ENCODE measurements at regions of chr5 and their contacts with region 1.

Region 1: DNA sequence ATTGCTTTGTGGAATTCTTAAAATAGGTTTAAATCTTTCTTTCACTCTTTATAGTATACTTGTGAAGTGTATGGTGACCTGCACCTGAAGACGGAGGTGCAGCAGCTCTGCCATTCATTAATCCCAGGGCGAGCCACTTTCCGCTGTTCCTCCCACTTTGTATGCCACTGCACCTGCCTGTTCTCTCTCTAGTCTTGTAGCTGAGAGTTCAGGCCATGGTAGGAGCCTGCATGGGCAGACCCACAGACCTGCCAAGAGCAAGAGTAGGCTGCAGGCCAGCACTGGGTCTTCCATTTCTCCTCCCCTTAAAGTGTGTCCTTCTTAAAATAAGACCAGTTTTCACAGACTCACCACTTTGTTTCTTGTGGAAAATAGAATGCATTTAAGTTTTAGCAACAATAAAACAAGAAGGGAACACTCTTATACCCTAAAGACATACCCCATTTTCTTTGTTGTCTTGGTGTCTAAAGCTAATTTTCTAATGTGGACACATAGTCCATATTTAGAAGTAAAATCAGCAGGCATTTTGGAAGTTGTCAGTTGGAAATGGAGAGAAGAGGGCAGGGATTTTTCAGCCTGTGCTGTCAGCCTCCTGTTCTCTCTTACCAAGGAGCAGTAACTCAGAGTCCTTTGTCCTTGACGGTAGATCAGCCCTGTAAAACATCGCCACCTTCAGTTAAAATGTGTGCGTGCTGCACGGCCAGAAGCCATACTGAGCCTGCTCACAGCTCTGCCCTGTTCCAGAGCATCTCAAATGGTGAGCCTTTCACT is 103.2 kb downstream of the SNCAIP start:
- DNase-seq: peak; percentile 55
- H3K4me3 ChIP-seq: no peak overlapping the region
- H3K27ac ChIP-seq: no peak overlapping the region; a peak in 1 of 4 replicates
- H3K4me1 ChIP-seq: peaks cover 0 to 6% of the 10 kb centered on the region in 2 experiments; a peak in 1 of 4 replicates
- H3K27me3 ChIP-seq: no peaks in the 10 kb centered on the region
- CTCF ChIP-seq: peak; percentile 62
- EP300 ChIP-seq: no peak
- RAD21 ChIP-seq: peak; percentile 98

Region 2: DNA sequence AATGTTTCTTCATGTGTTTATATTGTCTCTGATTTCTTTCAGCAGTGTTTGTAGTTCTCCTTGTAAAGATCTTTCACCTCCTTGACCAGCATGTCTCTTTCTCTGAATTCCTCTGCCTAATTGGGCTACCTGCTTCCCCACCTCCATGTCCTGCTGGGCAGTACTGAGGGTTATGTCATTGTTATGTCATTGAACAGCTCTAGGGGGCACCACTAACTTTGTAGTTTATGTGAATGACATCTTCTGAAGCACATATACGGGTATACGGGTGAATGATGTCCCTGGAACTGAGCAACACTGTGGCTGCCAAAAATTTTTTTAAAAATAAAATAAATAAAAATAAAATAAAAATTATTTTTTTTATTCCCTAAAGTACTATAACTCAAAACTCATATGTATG is 120.1 kb before region 1 on chr5:
- CTCF ChIA-PET with region 1: interaction called, 10 read pairs
- POLR2A ChIA-PET with region 1: no interaction called
- DNase-seq: peak; percentile 13
- H3K4me3 ChIP-seq: no peak overlapping the region
- H3K27ac ChIP-seq: no peak overlapping the region
- H3K4me1 ChIP-seq: peaks cover 0 to 5% of the 10 kb centered on the region in 2 experiments; a peak in 2 of 4 replicates
- H3K27me3 ChIP-seq: no peaks in the 10 kb centered on the region
- CTCF ChIP-seq: peak; percentile 26; the same call in 1 of the 2 replicates
- EP300 ChIP-seq: no peak
- RAD21 ChIP-seq: peak; percentile 50

Region 3: GRCh38 chr5:122400938-122401337 is 14.3 kb before region 1 on chr5:
- CTCF ChIA-PET with region 1: interaction called, 40 read pairs
- POLR2A ChIA-PET with region 1: no interaction called
- DNase-seq: no peak
- H3K4me3 ChIP-seq: no peak overlapping the region
- H3K27ac ChIP-seq: no peak overlapping the region
- H3K4me1 ChIP-seq: peaks cover 0 to 16% of the 10 kb centered on the region in 2 experiments; a peak in 1 of 4 replicates
- H3K27me3 ChIP-seq: no peaks in the 10 kb centered on the region
- CTCF ChIP-seq: no peak
- EP300 ChIP-seq: no peak
- RAD21 ChIP-seq: no peak

Region 4: GRCh38 chr5:122500245-122501075 is 85.2 kb after region 1 on chr5:
- CTCF ChIA-PET with region 1: interaction called, 16 read pairs
- POLR2A ChIA-PET with region 1: no interaction called
- DNase-seq: peak; percentile 59
- H3K4me3 ChIP-seq: no peak overlapping the region; a peak in 1 of 4 replicates
- H3K27ac ChIP-seq: no peak overlapping the region
- H3K4me1 ChIP-seq: peaks cover 0 to 8% of the 10 kb centered on the region in 2 experiments; a peak in 2 of 4 replicates
- H3K27me3 ChIP-seq: no peaks in the 10 kb centered on the region
- CTCF ChIP-seq: peak; percentile 65
- EP300 ChIP-seq: no peak
- RAD21 ChIP-seq: peak; percentile 85